ENCODE measurements at regions of chr17 and their contacts with region 1.

Region 1: DNA sequence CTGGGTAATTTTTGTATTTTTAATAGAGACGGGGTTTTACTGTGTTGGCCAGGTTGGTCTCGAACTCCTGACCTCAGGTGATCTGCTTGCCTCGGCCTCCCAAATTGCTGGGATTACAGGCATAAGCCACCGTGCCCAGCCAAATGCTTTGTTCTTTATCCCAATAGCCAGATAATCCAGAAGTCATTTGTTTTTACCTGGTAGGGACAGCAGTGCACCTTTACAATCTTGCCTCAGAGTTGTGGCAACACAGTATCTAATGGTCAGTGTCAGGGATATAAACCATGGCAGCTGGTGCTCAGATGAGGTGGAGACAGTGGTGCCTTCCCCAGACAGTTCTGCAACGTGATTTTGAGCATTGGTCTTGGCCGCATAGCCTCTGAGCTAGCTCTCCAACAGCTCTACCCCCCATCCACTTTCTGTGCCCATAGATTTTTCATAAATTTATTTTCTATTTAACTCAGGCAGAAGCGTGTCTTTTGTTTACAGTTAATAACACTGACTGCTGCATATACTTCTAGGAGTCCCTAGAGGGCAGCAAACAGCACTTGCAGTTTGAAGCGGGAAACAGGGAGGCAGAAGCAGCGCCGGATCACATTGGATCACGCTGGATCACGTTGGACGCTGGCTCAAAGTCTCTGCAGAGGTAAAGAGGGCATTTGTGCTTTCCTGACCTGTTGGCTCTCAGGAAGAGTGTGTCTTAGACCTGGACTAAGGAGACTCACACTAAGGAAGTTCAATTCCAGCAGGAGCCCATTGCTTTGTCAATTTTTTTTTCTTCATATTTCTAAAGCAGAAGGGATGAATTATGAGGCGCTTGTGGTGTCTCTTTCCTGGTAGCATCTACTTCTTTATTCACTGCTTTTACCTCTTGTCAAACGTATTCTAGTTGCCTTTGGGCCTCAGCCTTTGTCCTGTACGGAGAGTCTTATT is 5.1 kb upstream of the GGT6 start:
- DNase-seq: peak; percentile 72
- H3K4me3 Mint-ChIP-seq: no peak overlapping the region
- H3K27ac Mint-ChIP-seq: no peak overlapping the region
- H3K4me1 Mint-ChIP-seq: peaks cover 38% of the 10 kb centered on the region
- H3K27me3 Mint-ChIP-seq: no peaks in the 10 kb centered on the region

Region 2: GRCh38 chr17:4394208-4395110 is 171.0 kb before region 1 on chr17:
- CTCF ChIA-PET with region 1: no interaction called
- POLR2A ChIA-PET with region 1: no interaction called
- intact Hi-C with region 1: no loop called
- DNase-seq: no peak
- H3K4me3 Mint-ChIP-seq: no peak overlapping the region
- H3K27ac Mint-ChIP-seq: no peak overlapping the region
- H3K4me1 Mint-ChIP-seq: peaks cover 17% of the 10 kb centered on the region
- H3K27me3 Mint-ChIP-seq: peaks cover 2% of the 10 kb centered on the region

Region 3: GRCh38 chr17:4420692-4421131 is 144.8 kb before region 1 on chr17:
- CTCF ChIA-PET with region 1: interaction called, 15 read pairs
- POLR2A ChIA-PET with region 1: no interaction called
- intact Hi-C with region 1: loop called (anchors 5 kb)
- DNase-seq: peak; percentile 68
- H3K4me3 Mint-ChIP-seq: no peak overlapping the region
- H3K27ac Mint-ChIP-seq: no peak overlapping the region
- H3K4me1 Mint-ChIP-seq: peaks cover 3% of the 10 kb centered on the region
- H3K27me3 Mint-ChIP-seq: no peaks in the 10 kb centered on the region

Region 4: GRCh38 chr17:4587803-4588202 is 22.3 kb after region 1 on chr17:
- CTCF ChIA-PET with region 1: interaction called, 14 read pairs
- POLR2A ChIA-PET with region 1: no interaction called
- intact Hi-C with region 1: no loop called
- DNase-seq: no peak
- H3K4me3 Mint-ChIP-seq: no peak overlapping the region
- H3K27ac Mint-ChIP-seq: no peak overlapping the region
- H3K4me1 Mint-ChIP-seq: peaks cover 6% of the 10 kb centered on the region
- H3K27me3 Mint-ChIP-seq: peaks cover 33% of the 10 kb centered on the region

Region 5: GRCh38 chr17:4625181-4625617 is 59.7 kb after region 1 on chr17:
- CTCF ChIA-PET with region 1: interaction called, 97 read pairs
- POLR2A ChIA-PET with region 1: no interaction called
- intact Hi-C with region 1: loop called (anchors 1 kb)
- DNase-seq: no peak
- H3K4me3 Mint-ChIP-seq: no peak overlapping the region
- H3K27ac Mint-ChIP-seq: no peak overlapping the region
- H3K4me1 Mint-ChIP-seq: no peaks in the 10 kb centered on the region
- H3K27me3 Mint-ChIP-seq: peaks cover 15% of the 10 kb centered on the region

Region 6: DNA sequence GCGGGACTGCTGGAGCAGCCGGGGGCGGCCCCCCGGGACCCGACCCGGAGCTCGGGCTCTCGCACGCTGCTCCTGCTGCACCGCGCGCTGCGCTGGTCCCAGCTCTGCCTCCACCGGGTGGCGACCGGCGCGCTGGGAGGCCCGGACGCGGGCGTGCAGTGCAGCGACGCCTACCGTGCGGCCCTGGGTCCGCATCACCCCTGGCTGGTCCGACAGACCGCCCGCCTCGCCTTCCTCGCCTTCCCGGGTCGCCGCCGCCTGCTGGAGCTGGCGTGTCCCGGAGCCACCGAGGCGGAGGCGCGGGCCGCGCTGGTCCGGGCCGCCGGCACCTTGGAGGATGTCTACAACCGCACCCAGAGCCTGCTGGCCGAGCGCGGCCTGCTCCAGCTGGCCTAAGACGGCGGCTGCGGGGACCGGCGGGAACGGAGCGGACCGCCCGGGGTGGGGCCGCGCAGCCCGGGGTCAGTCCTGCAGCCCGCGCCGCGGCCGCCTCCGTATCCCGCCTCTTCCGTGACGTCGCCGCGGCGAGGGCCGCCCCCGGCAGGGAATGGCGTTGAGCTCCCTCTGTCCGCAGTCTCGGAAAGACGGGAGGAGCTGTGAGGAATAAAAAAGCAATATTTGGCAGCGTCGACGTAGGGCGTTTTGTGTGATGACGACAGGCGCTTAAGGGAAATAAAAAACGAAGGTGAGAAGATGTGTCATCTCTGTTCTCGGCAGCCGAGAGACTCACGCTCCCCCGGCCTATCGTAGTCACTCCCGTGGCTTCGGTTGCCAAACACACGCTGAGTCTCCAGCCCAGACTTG is 224.6 kb after region 1 on chr17:
- CTCF ChIA-PET with region 1: interaction called, 6 read pairs
- POLR2A ChIA-PET with region 1: no interaction called
- intact Hi-C with region 1: loop called (anchors 5 kb)
- DNase-seq: peak; percentile 89
- H3K4me3 Mint-ChIP-seq: peak overlapping the region; percentile 77
- H3K27ac Mint-ChIP-seq: peak overlapping the region; percentile 82
- H3K4me1 Mint-ChIP-seq: peaks cover 31% of the 10 kb centered on the region
- H3K27me3 Mint-ChIP-seq: peaks cover 25% of the 10 kb centered on the region

Measured in activated CD4-positive, alpha-beta memory T cell treated with anti-CD3 and anti-CD28 coated beads for 36 hours (primary cell).